Right cardiac atrium (tissue), 5 donors: ENCODE measurements at regions of chr2 and their contacts with region 1.

Region 1: DNA sequence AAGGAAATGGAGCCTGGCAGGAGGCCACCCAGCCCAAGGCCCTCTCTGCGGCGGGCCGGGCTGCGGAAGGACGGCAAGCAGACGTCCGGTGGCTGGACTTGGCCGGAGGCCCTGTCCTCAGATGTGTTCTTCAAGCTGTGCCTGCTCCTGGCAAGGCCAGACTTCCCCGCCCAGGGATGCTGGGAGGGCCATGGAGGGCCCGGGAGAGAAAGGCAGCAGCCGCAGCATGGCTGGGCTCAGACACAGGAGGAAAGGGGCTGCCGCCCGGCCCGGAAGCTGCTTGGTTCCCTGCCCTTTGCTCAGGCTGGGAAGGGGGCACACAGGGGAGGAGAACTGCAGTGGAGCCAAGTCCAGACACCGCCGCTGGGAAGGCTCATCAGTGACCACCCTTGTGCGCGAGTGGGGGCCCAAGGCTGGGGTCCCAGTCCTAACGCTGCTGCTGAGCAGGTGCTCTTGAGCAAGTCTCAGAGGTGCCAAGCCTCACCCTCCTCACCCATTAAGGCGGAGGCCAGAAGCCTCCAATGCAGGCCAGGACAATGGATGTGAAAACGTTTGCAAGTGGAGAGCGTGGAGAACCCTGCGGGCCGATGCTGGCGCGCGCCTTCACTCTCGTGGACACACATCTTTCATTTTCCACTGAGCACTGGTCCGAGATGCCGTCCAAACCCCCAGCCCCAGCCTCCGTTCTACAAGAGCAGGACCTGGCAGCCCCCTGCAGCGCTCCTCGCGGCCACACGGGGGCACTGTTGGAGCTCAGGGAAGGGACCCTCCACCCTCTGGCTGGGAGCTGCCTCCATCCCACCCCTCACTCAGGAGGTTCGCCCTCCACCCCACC is 7.9 kb downstream of the CROCC2 start:
- DNase-seq: peak; percentile 93 to 96 (median 93)
- ATAC-seq: peak; percentile 75 to 87
- H3K4me3 ChIP-seq: no peak overlapping the region
- H3K27ac ChIP-seq: no peak overlapping the region
- H3K4me1 ChIP-seq: no peaks in the 10 kb centered on the region
- H3K27me3 ChIP-seq: no peaks in the 10 kb centered on the region

Region 2: GRCh38 chr2:240369801-240370585 is 544.0 kb before region 1 on chr2:
- intact Hi-C with region 1: no loop called
- DNase-seq: peak; percentile 72 to 91 (median 86)
- ATAC-seq: peak; percentile 72 to 79
- H3K4me3 ChIP-seq: no peak overlapping the region
- H3K27ac ChIP-seq: peak overlapping the region; percentile 93
- H3K4me1 ChIP-seq: peaks cover 8% of the 10 kb centered on the region
- H3K27me3 ChIP-seq: no peaks in the 10 kb centered on the region

Region 3: DNA sequence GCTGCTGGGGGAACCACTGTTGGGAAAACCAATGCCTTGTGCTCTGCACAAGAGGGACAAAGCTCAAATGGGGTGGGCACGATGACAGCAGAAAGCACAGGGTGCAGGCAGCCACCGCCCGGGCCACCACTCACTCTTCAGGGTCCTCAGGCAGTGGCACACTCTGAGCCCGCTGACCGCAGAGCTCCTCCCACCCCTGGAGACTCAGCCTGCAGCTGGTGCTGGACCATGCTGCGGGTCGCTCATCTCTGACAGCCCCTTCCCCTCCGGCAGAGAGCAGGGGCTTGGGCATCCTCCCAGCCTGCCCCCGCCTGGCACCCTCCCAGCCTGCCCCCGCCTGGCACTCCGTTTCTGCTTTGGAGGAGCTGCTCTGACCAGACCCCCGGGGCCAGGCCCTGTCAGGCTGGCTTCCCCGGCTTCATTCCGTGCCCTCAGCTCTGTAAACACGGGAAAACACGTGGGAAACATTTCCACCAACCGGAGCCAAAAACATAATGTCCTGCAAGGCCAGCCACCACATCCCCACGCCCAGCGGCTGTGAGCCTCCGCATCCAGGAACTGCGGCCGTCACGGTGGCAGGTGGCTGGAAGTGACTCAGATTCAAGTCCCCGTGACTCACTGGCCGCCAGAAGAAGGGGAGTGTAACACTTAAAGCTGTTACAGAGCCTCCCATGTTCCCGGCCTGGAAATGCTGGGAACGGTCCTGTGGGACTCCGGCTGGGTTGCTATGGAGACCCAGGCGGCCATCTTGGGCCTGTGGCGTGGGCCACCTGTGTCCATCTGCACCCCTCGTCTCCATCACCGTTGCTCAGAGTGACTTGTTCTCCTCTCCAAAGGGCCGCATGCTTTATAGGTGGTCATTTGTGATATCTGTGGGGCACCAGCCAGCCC is 77.6 kb after region 1 on chr2:
- intact Hi-C with region 1: loop called (anchors 5 to 10 kb)
- DNase-seq: peak; percentile 92 to 95 (median 95)
- ATAC-seq: peak; percentile 78 to 86
- H3K4me3 ChIP-seq: no peak overlapping the region
- H3K27ac ChIP-seq: peak overlapping the region; percentile 59
- H3K4me1 ChIP-seq: peaks cover 13% of the 10 kb centered on the region
- H3K27me3 ChIP-seq: no peaks in the 10 kb centered on the region

Region 4: DNA sequence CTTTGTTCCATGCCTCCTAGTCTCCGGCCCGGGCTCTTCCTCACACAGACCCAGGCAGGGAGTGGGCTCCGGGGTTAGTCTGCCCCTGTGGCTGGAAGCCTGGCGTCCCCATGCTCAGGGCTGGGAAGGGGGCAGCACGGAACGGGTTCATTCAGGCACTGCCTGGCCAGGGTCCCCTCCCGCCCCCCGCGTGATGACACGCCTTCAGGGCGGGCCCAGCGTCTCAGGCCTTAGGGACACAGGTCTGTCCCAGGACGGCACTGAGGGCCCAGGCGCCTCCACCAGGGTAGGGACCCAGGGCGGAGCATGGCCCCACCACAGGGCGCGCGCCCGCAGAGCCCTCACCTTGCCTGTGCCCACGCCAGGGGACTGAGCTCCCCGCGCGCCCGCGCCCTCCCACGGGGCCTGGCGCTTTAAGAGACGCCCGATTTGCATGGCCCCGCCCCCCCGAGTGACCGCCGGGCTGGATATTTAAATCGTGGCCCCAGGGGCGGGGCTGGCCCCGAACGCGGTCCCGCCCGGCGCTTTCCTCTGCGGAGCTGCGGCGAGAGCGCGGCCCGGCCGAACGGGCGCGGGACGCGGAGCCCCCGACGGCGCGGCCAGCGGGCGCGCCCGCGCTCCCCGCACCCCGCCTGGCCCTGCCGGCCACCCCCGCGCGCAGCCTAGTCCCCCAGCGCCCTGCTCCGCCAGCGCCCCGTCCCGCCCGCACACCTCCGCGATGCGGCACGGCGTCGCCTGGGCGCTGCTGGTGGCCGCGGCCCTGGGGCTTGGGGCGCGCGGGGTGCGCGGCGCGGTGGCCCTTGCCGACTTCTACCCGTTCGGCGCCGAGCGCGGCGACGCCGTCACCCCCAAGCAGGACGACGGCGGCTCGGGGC is 84.3 kb after region 1 on chr2 and contains the start of gene SNED1:
- intact Hi-C with region 1: loop called (anchors 5 to 10 kb)
- DNase-seq: peak; percentile 93 to 98 (median 95)
- ATAC-seq: peak; percentile 87 to 88
- H3K4me3 ChIP-seq: peak within 1 kb of the TSS; percentile 73
- H3K27ac ChIP-seq: peak within 1 kb of the TSS; percentile 63
- H3K4me1 ChIP-seq: peaks cover 12% of the 10 kb centered on the region
- H3K27me3 ChIP-seq: no peaks in the 10 kb centered on the region
- total RNA-seq, gene SNED1: 13.8 to 19.2 (median 16.8) TPM